B cell (primary cell): ENCODE measurements at regions of chr3 and their contacts with region 1.

Region 1: GRCh38 chr3:114005481-114005880 is 50.8 kb downstream of the CCDC191 start:
- DNase-seq: peak; percentile 91
- ATAC-seq: peak; percentile 95
- H3K4me3 ChIP-seq: peak overlapping the region in 4 of 5 experiments; percentile 31 to 43 (median 38)
- H3K4me3 Mint-ChIP-seq: peak overlapping the region; percentile 80
- H3K27ac ChIP-seq: peak overlapping the region; percentile 93 to 94
- H3K27ac Mint-ChIP-seq: peak overlapping the region; percentile 98
- H3K4me1 ChIP-seq: peaks cover 34 to 45% of the 10 kb centered on the region in 2 donors
- H3K4me1 Mint-ChIP-seq: peaks cover 55% of the 10 kb centered on the region
- H3K27me3 ChIP-seq: no peaks in the 10 kb centered on the region
- H3K27me3 Mint-ChIP-seq: no peaks in the 10 kb centered on the region
- CTCF ChIP-seq: peak; percentile 38

Region 2: DNA sequence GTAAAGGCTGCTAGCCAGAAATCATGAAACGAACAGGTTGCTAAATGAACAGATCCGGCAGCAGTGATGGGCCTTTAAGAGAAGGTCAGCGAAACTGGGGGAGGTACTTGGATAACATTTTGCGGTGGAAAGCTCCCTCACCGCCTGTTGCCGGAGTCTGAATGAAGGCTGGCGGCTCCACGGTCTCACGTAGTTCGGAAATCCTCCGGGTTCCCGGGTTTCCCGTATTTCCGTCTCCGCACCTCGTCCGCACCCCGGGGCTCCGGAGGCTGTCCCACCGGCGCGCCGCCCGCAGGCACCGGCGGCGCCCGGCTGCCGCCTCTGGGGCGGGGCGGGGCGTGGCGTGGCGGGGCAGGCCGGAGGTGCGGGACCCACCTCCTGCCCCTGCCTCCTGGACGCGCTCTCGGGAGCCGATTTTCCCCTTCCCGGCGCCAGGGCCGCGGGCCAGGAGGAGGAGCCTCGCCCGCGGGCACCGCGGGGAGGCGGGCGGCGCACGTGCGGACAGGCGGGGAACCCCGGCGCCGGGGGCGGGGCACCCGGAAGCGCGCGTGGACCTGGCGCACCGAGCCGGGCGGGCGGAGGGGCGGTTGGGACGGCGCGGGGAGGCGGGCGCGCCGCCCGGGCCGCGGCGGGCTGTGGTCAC is 58.0 kb before region 1 on chr3 and contains the start of gene ZDHHC23:
- CTCF ChIA-PET with region 1: no interaction called
- POLR2A ChIA-PET with region 1: interaction called, 3 read pairs
- intact Hi-C with region 1: loop called (anchors 1 kb)
- DNase-seq: peak; percentile 88
- ATAC-seq: peak; percentile 84
- H3K4me3 ChIP-seq: peak within 1 kb of the TSS; percentile 47 to 89 (median 84)
- H3K4me3 Mint-ChIP-seq: peak within 1 kb of the TSS; percentile 87
- H3K27ac ChIP-seq: peak within 1 kb of the TSS; percentile 48 to 74
- H3K27ac Mint-ChIP-seq: peak within 1 kb of the TSS; percentile 89
- H3K4me1 ChIP-seq: peaks cover 12 to 14% of the 10 kb centered on the region in 2 donors
- H3K4me1 Mint-ChIP-seq: peaks cover 18% of the 10 kb centered on the region
- H3K27me3 ChIP-seq: no peaks in the 10 kb centered on the region
- H3K27me3 Mint-ChIP-seq: no peaks in the 10 kb centered on the region
- CTCF ChIP-seq: no peak
- total RNA-seq, gene ZDHHC23: 72.6 and 75.1 TPM in 2 replicates

Region 3: DNA sequence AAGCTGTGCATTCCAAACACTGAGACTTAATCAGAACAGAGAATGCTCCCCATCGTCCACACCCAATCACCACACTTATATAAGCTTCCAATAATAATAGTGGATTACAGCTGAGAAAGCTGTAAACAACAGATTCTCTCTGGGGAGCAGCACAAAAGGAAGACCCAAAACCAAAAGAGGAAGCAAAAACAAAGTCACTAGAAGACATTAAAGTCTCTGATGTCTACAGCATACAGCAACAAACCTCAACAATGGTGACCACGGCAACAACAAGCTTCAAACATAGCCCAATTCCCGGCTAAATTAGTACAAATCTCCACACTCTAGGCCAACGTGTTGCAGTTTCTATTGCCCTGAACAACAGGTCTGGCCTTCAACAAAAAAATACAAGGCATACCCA is 19.9 kb before region 1 on chr3:
- CTCF ChIA-PET with region 1: interaction called, 20 read pairs
- POLR2A ChIA-PET with region 1: interaction called, 33 read pairs
- intact Hi-C with region 1: loop called (anchors 1 kb)
- DNase-seq: peak; percentile 84
- ATAC-seq: peak; percentile 94
- H3K4me3 ChIP-seq: peak overlapping the region in 4 of 5 experiments; percentile 4 to 34 (median 5)
- H3K4me3 Mint-ChIP-seq: peak overlapping the region; percentile 79
- H3K27ac ChIP-seq: peak overlapping the region; percentile 97 to 98
- H3K27ac Mint-ChIP-seq: peak overlapping the region; percentile 98
- H3K4me1 ChIP-seq: peaks cover 39 to 43% of the 10 kb centered on the region in 2 donors
- H3K4me1 Mint-ChIP-seq: peaks cover 58% of the 10 kb centered on the region
- H3K27me3 ChIP-seq: no peaks in the 10 kb centered on the region
- H3K27me3 Mint-ChIP-seq: no peaks in the 10 kb centered on the region
- CTCF ChIP-seq: no peak

Region 4: GRCh38 chr3:114043205-114043604 is 37.7 kb after region 1 on chr3:
- CTCF ChIA-PET with region 1: interaction called, 12 read pairs
- POLR2A ChIA-PET with region 1: no interaction called
- intact Hi-C with region 1: loop called (anchors 1 kb)
- DNase-seq: peak; percentile 55
- ATAC-seq: peak; percentile 61
- H3K4me3 ChIP-seq: no peak overlapping the region
- H3K4me3 Mint-ChIP-seq: no peak overlapping the region
- H3K27ac ChIP-seq: no peak overlapping the region
- H3K27ac Mint-ChIP-seq: peak overlapping the region; percentile 4
- H3K4me1 ChIP-seq: no peaks in the 10 kb centered on the region
- H3K4me1 Mint-ChIP-seq: peaks cover 5% of the 10 kb centered on the region
- H3K27me3 ChIP-seq: no peaks in the 10 kb centered on the region
- H3K27me3 Mint-ChIP-seq: no peaks in the 10 kb centered on the region
- CTCF ChIP-seq: peak; percentile 22

Region 5: GRCh38 chr3:114454551-114455251 is 449.2 kb after region 1 on chr3:
- CTCF ChIA-PET with region 1: no interaction called
- POLR2A ChIA-PET with region 1: no interaction called
- intact Hi-C with region 1: no loop called
- DNase-seq: peak; percentile 67
- ATAC-seq: peak; percentile 14
- H3K4me3 ChIP-seq: peak overlapping the region; percentile 11 to 71 (median 53)
- H3K4me3 Mint-ChIP-seq: no peak overlapping the region
- H3K27ac ChIP-seq: peak overlapping the region; percentile 79 to 92
- H3K27ac Mint-ChIP-seq: no peak overlapping the region
- H3K4me1 ChIP-seq: peaks cover 47 to 55% of the 10 kb centered on the region in 2 donors
- H3K4me1 Mint-ChIP-seq: peaks cover 40% of the 10 kb centered on the region
- H3K27me3 ChIP-seq: no peaks in the 10 kb centered on the region
- H3K27me3 Mint-ChIP-seq: no peaks in the 10 kb centered on the region
- CTCF ChIP-seq: no peak